ENCODE measurements at regions of chr1 and their contacts with region 1.

Region 1: DNA sequence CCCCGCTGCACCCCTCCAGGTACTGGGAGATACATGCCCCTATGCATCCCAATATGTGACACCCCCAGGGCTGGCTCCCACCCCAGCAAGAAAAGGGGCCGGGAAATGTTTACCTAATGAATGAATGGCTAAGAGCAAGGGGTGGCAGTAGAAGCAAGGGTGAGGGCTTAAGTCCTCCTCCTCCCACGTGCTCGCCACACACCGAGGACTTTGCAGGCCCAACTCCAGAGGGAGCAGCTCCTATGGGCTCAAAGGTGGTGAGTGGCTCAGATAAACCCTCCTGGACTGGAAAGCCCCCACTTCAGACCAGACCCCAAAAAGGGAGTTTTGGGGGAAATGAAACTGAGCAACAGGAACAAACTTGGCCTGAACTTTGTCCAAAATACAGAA is 11.4 kb downstream of the SLC45A3 start:
- DNase-seq: no peak
- H3K4me3 ChIP-seq: peak overlapping the region in 1 of 2 donors; percentile 84
- H3K27ac ChIP-seq: peak overlapping the region; percentile 37 to 89
- H3K4me1 ChIP-seq: peaks cover 5% of the 10 kb centered on the region
- H3K27me3 ChIP-seq: no peaks in the 10 kb centered on the region
- CTCF ChIP-seq: no peak
- POLR2A ChIP-seq: no peak

Region 2: GRCh38 chr1:205591522-205592351 is 77.2 kb before region 1 on chr1:
- intact Hi-C with region 1: no loop called
- DNase-seq: peak; percentile 92
- H3K4me3 ChIP-seq: peak overlapping the region; percentile 10 to 15
- H3K27ac ChIP-seq: peak overlapping the region; percentile 50 to 63
- H3K4me1 ChIP-seq: no peaks in the 10 kb centered on the region
- H3K27me3 ChIP-seq: no peaks in the 10 kb centered on the region
- CTCF ChIP-seq: peak; percentile 89 to 100 (median 98)
- POLR2A ChIP-seq: peak; percentile 46

Region 3: DNA sequence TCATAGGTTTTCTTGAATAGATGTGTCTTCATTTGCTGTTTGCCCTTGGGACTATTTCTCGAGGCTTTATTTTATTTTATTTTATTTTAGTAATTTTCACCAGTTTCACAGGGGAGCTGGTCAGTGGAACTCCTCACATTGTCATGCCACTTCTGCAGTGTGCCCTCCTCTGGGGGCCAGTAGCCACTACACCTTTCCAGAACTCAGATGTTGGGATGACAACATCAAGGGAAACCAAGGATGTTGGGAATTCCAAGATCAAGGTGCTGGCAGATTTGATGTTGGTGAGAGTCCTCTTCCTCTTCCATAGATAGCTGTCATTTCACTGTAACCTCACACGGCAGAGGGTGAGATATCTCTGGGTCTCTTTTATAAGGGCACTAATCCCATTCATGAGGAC is 238.8 kb after region 1 on chr1:
- intact Hi-C with region 1: no loop called
- DNase-seq: no peak
- H3K4me3 ChIP-seq: no peak overlapping the region
- H3K27ac ChIP-seq: no peak overlapping the region
- H3K4me1 ChIP-seq: no peaks in the 10 kb centered on the region
- H3K27me3 ChIP-seq: no peaks in the 10 kb centered on the region
- CTCF ChIP-seq: peak in 2 of 4 experiments; percentile 46 to 47
- POLR2A ChIP-seq: no peak

Region 4: GRCh38 chr1:206094024-206094423 is 425.1 kb after region 1 on chr1:
- intact Hi-C with region 1: loop called (anchors 10 kb)
- DNase-seq: no peak
- H3K4me3 ChIP-seq: no peak overlapping the region
- H3K27ac ChIP-seq: no peak overlapping the region
- H3K4me1 ChIP-seq: no peaks in the 10 kb centered on the region
- H3K27me3 ChIP-seq: no peaks in the 10 kb centered on the region
- CTCF ChIP-seq: no peak
- POLR2A ChIP-seq: no peak